ENCODE measurements at regions of chr14 and their contacts with region 1.

Region 1: DNA sequence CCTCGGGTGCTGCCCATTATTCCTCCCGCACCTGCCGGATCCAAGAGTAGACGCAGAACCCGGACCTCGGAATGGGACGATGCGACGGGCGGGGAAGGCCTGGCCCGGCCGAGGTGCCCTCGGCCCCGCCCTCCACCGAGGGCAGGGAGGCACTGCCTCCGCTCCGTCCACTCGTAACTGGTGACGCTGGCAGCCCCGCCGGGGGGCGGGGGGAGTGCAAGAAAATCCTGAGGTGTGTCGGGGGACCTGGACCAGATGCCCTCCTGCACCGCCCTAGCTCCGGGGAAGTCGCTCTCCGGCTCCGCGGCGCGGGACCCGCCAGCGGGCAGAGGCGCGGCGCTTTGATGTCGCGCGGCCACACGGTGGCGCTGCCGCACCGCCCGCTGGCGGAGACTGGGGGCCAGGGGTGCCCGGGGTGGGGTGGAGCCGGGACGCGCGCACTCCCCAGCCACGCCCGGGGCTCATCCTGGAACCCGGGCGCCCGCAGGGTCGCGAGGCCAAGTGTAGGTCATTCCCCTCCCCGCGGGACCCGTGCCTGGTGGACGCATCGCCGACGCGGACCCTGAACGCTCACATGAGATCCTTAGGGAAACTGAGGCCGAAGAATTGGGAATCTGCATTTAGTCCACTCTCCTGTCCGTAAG is 202.8 kb downstream of the TTC8 start:
- DNase-seq: peak; percentile 51
- ATAC-seq: peak; percentile 94
- H3K4me3 Mint-ChIP-seq: peak overlapping the region; percentile 62
- H3K27ac Mint-ChIP-seq: no peak overlapping the region
- H3K4me1 Mint-ChIP-seq: no peaks in the 10 kb centered on the region
- H3K27me3 Mint-ChIP-seq: peaks cover 59% of the 10 kb centered on the region
- CTCF ChIP-seq: peak; percentile 88

Region 2: DNA sequence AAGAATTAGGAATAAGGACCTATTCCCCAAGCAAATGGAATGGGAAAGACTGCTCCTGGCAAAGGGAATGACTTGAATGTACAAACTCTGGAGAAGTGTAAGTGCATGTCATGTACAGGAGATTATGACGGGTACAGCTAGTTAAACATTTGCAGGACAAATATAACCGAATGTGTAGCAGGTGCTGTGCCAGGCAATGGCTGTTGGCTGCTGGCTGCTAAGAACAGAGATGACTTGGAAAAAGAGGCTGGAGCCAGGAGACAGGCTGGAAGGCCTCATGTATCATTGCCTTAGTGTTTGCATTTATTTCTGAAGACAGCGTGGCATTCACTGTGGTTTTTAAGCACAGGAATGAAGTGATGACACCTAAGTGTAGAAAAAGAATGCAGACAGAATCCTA is 66.0 kb before region 1 on chr14:
- CTCF ChIA-PET with region 1: no interaction called
- POLR2A ChIA-PET with region 1: no interaction called
- intact Hi-C with region 1: no loop called
- DNase-seq: no peak
- ATAC-seq: no peak
- H3K4me3 Mint-ChIP-seq: no peak overlapping the region
- H3K27ac Mint-ChIP-seq: no peak overlapping the region
- H3K4me1 Mint-ChIP-seq: no peaks in the 10 kb centered on the region
- H3K27me3 Mint-ChIP-seq: peaks cover 16% of the 10 kb centered on the region
- CTCF ChIP-seq: no peak

Region 3: DNA sequence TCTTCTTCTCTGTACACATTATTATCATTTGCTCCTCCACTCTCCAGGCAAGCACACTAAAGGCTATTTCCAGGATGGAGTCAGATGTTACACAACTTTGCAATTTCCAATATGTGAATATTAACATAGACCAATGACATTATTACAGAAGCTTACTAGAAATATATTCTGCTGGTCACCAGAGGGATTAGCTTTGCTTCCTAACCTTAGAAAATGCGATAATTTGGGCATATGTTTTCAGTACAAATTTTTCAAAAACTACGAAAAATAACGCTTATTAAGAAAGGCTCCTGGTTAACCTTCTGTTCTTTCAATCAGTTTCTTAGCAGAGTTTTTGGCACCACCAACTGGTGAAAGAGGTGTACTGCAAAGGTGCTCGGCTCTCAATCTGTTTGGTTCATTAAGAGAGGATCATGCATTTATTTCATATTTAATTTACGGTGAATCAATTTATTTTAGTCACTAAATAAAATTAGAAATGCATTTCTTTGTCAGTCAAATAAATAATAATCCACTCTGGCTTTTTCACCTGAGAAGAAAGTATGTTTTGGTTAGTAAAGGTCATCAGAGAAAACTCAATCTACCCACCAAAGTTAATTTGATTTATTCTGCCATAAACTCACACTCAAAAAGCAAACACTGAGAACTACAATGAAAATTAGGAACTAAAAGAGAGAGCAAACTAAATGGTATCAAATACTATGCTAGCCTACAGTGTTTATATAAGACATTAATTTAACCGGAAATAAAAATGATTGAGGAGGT is 888.1 kb after region 1 on chr14:
- CTCF ChIA-PET with region 1: interaction called, 13 read pairs
- POLR2A ChIA-PET with region 1: no interaction called
- intact Hi-C with region 1: loop called (anchors 5 kb)
- DNase-seq: peak; percentile 77
- ATAC-seq: peak; percentile 66
- H3K4me3 Mint-ChIP-seq: no peak overlapping the region
- H3K27ac Mint-ChIP-seq: no peak overlapping the region
- H3K4me1 Mint-ChIP-seq: peaks cover 3% of the 10 kb centered on the region
- H3K27me3 Mint-ChIP-seq: peaks cover 10% of the 10 kb centered on the region
- CTCF ChIP-seq: peak; percentile 98

Region 4: DNA sequence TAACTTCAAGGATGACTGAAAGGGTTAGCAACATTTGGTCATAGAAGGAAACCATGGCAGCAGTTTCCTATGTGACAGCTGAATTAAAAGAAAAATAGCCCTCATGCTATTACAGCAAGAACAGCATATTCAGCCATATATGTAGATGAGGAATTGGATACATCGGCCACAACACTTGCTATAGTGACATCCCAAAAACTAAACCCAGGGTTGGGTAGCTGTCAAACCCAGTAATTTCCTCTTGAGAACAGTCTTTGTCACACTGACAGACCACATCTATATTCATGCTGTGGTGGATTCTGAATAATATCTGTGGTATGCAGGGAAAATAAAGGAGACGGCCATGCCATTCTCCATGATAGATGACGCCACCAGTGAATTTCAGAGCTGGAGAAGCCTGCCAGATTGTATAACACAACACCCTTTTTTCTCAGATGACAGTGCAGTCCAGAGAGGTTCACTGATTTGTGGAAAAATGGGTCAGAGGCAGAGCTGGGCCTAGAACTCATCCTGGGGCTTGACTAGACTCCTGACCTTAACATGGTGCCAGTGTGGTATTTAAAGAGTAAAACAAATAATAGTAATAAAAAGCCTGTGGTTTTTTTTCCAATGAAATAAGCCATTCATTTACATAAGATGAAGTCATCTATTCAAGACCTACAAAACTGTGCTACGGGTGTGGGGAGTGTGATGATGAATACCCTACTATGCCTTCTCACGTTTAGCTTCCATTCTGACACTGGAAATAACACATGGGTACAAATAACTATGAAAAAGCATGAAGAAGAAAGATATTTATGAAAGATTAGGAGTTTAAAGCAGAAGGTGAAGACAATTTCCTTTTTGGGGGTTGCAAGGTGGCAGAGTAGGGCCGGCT is 895.0 kb after region 1 on chr14:
- CTCF ChIA-PET with region 1: interaction called, 15 read pairs
- POLR2A ChIA-PET with region 1: no interaction called
- intact Hi-C with region 1: no loop called
- DNase-seq: no peak
- ATAC-seq: no peak
- H3K4me3 Mint-ChIP-seq: no peak overlapping the region
- H3K27ac Mint-ChIP-seq: no peak overlapping the region
- H3K4me1 Mint-ChIP-seq: peaks cover 2% of the 10 kb centered on the region
- H3K27me3 Mint-ChIP-seq: no peaks in the 10 kb centered on the region
- CTCF ChIP-seq: no peak

Region 5: GRCh38 chr14:90235179-90235976 is 1208.2 kb after region 1 on chr14:
- CTCF ChIA-PET with region 1: no interaction called
- POLR2A ChIA-PET with region 1: no interaction called
- intact Hi-C with region 1: loop called (anchors 10 kb)
- DNase-seq: peak; percentile 75
- ATAC-seq: peak; percentile 87
- H3K4me3 Mint-ChIP-seq: no peak overlapping the region
- H3K27ac Mint-ChIP-seq: no peak overlapping the region
- H3K4me1 Mint-ChIP-seq: no peaks in the 10 kb centered on the region
- H3K27me3 Mint-ChIP-seq: peaks cover 10% of the 10 kb centered on the region
- CTCF ChIP-seq: peak; percentile 99

Measured in activated CD8-positive, alpha-beta T cell treated with anti-CD3 and anti-CD28 coated beads for 36 hours (primary cell).